ENCODE measurements at regions of chr3 and their contacts with region 1.

Region 1: DNA sequence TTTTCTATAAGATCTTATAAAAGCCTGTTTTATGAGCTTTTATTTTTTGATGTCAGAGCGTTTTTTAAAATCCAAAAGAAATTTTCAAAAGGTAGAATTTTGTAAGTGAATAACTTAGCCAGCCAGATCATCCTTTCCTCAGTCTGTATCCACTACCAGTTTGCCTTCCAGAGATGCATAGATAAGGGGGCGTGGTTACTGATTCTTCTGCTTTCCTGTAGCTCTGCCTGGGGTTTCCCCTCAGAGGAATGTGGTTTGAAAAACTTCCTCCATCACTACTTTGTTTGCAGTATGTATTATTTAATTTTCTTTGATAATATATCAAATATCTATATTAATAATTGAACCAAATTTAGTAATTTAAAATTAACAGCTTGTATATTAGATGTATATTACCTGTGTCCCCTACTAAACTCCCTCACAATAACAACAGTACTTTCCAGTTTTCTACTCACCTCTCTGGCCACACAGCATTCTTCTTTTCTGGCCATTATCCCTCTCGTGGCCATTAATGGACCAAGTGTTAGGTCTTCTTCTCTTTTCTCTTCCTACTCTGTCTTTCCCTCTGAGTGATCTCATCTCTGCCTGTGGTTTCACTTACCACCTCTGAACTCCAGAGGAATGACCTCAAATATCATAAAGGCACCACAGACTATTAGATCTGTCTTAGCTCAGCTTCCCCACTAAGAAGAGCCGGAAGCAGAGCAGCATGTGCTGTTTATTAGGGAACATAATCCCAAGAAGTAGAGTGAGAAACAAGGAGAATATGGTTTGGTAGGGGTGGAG is 239.7 kb downstream of the UBE2E2 start:
- DNase-seq: peak; percentile 23
- ATAC-seq: peak; percentile 34
- H3K4me3 Mint-ChIP-seq: no peak overlapping the region
- H3K27ac Mint-ChIP-seq: peak overlapping the region; percentile 63
- H3K4me1 Mint-ChIP-seq: peaks cover 51% of the 10 kb centered on the region
- H3K27me3 Mint-ChIP-seq: no peaks in the 10 kb centered on the region
- CTCF ChIP-seq: no peak

Region 2: GRCh38 chr3:23805633-23806533 is 363.1 kb after region 1 on chr3 and contains the start of gene UBE2E1:
- CTCF ChIA-PET with region 1: no interaction called
- POLR2A ChIA-PET with region 1: no interaction called
- intact Hi-C with region 1: loop called (anchors 10 kb)
- DNase-seq: peak; percentile 76
- ATAC-seq: peak; percentile 67
- H3K4me3 Mint-ChIP-seq: peak within 1 kb of the TSS; percentile 87
- H3K27ac Mint-ChIP-seq: peak within 1 kb of the TSS; percentile 94
- H3K4me1 Mint-ChIP-seq: peaks cover 43% of the 10 kb centered on the region
- H3K27me3 Mint-ChIP-seq: peaks cover 8% of the 10 kb centered on the region
- CTCF ChIP-seq: no peak
- total RNA-seq, gene UBE2E1: 79.0 to 80.3 TPM